Naive thymus-derived CD4-positive, alpha-beta T cell (primary cell): ENCODE measurements at regions of chr3 and their contacts with region 1.

Region 1: DNA sequence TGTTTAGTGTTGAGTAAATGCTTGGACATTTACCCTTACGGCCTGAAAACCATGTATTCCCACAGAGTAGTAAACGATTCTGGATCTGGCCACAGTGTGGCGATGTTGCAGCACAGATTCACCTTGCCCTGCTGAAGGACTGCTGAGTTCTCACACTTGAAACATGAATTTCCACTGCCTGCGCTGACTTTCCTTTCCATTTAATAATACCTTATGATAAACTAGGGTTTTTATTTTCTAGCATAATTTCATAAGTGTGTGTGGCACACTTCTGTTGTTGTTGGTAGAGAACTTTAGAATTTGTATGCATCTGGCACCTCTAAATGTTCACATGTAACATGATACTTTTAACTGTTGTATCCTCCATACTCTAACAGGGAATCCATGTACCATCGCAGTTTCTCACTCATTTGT is 53.9 kb downstream of the C3orf38 start:
- DNase-seq: peak in 8 of 9 donors; percentile 14 to 43 (median 30)
- ATAC-seq: peak; percentile 80
- H3K4me3 ChIP-seq: no peak overlapping the region
- H3K4me3 Mint-ChIP-seq: no peak overlapping the region
- H3K27ac ChIP-seq: no peak overlapping the region
- H3K27ac Mint-ChIP-seq: no peak overlapping the region
- H3K4me1 ChIP-seq: no peaks in the 10 kb centered on the region
- H3K4me1 Mint-ChIP-seq: peaks cover 0 to 3% (median 0%) of the 10 kb centered on the region in 7 donors
- H3K27me3 ChIP-seq: no peaks in the 10 kb centered on the region
- H3K27me3 Mint-ChIP-seq: peaks cover 0 to 12% (median 0%) of the 10 kb centered on the region in 5 donors

Region 2: GRCh38 chr3:89098964-89099585 is 895.4 kb after region 1 on chr3:
- CTCF ChIA-PET with region 1: no interaction called
- POLR2A ChIA-PET with region 1: no interaction called
- intact Hi-C with region 1: loop called (anchors 1 kb)
- DNase-seq: peak in 6 of 9 donors; percentile 17 to 40 (median 30)
- ATAC-seq: peak; percentile 84
- H3K4me3 ChIP-seq: no peak overlapping the region
- H3K4me3 Mint-ChIP-seq: no peak overlapping the region
- H3K27ac ChIP-seq: no peak overlapping the region
- H3K27ac Mint-ChIP-seq: no peak overlapping the region
- H3K4me1 ChIP-seq: no peaks in the 10 kb centered on the region
- H3K4me1 Mint-ChIP-seq: peaks cover 0 to 2% (median 0%) of the 10 kb centered on the region in 7 donors
- H3K27me3 ChIP-seq: no peaks in the 10 kb centered on the region
- H3K27me3 Mint-ChIP-seq: peaks cover 0 to 5% (median 0%) of the 10 kb centered on the region in 5 donors

Region 3: DNA sequence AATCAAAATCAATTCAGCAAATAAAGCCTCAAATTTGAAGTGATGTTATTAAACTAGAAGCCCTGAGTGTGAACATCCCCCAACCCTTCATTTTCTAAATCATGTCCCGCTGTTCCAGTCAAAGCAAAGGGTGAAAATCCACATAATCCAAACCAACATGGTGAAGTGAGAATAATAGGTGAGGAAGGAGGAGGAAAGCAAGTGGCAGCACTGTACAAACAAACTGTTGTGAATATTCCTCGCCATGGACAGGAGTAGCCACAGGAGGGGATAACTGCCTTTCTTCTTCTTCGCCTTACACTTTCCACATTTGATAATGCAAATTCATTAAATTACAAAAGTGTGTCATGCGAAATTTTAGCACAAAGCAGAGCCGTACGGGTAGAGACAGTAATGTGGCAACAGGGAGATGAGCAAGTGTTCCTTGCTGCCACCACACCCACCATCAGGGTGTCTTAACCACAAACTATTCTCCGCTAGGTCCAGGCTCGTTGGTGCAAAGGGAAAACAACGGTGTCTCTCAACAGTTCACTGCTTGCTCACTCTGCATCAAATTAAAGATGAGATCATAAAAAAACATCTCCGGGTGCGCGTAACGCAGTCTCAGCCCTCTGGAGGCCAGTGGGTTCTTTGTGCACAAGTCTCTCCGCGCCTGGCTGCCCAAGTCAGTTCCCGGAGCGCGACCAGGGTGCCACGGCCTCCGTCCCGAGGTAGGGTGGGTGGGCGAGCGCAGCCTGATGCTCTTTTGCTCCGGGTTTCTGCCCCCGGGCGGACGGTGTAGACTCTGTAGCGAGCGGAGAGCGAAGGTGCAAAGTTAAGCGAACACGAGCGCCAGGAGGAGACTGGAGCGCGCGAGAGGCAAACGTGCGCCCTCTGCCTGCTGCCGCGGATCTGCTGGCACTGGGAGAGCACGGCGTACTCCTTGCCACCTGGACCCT is 910.5 kb after region 1 on chr3:
- CTCF ChIA-PET with region 1: no interaction called
- POLR2A ChIA-PET with region 1: no interaction called
- intact Hi-C with region 1: loop called (anchors 1 kb)
- DNase-seq: peak in 6 of 9 donors; percentile 6 to 31 (median 11)
- ATAC-seq: peak; percentile 64
- H3K4me3 ChIP-seq: no peak overlapping the region
- H3K4me3 Mint-ChIP-seq: peak overlapping the region in 8 of 10 donors; percentile 23 to 74 (median 54)
- H3K27ac ChIP-seq: no peak overlapping the region
- H3K27ac Mint-ChIP-seq: no peak overlapping the region
- H3K4me1 ChIP-seq: no peaks in the 10 kb centered on the region
- H3K4me1 Mint-ChIP-seq: peaks cover 0 to 7% (median 5%) of the 10 kb centered on the region in 7 donors
- H3K27me3 ChIP-seq: peaks cover 0 to 5% of the 10 kb centered on the region in 2 donors
- H3K27me3 Mint-ChIP-seq: peaks cover 15 to 25% (median 18%) of the 10 kb centered on the region in 5 donors

Region 4: GRCh38 chr3:90091204-90091924 is 1887.7 kb after region 1 on chr3:
- CTCF ChIA-PET with region 1: no interaction called
- POLR2A ChIA-PET with region 1: no interaction called
- intact Hi-C with region 1: loop called (anchors 5 kb)
- DNase-seq: no peak
- ATAC-seq: no peak
- H3K4me3 ChIP-seq: no peak overlapping the region
- H3K4me3 Mint-ChIP-seq: no peak overlapping the region
- H3K27ac ChIP-seq: no peak overlapping the region
- H3K27ac Mint-ChIP-seq: no peak overlapping the region
- H3K4me1 ChIP-seq: no peaks in the 10 kb centered on the region
- H3K4me1 Mint-ChIP-seq: no peaks in the 10 kb centered on the region
- H3K27me3 ChIP-seq: no peaks in the 10 kb centered on the region
- H3K27me3 Mint-ChIP-seq: no peaks in the 10 kb centered on the region